ENCODE measurements at regions of chr22 and their contacts with region 1.

Region 1: GRCh38 chr22:36977947-36978660 is 41.1 kb downstream of the TST start:
- DNase-seq: peak; percentile 57
- ATAC-seq: peak; percentile 90
- H3K4me3 ChIP-seq: peak overlapping the region; percentile 47; the same call in 1 of the 2 replicates
- H3K27ac ChIP-seq: peak overlapping the region; percentile 13; the same call in 1 of the 2 replicates
- H3K4me1 ChIP-seq: no peaks in the 10 kb centered on the region; the same call in 1 of the 2 replicates
- H3K27me3 ChIP-seq: no peaks in the 10 kb centered on the region; a peak in 1 of 4 replicates
- CTCF ChIP-seq: peak; percentile 84 to 99 (median 91)
- EP300 ChIP-seq: no peak
- POLR2A ChIP-seq: no peak; the same call in 1 of the 2 replicates
- RAD21 ChIP-seq: peak; percentile 90

Region 2: GRCh38 chr22:36757668-36758211 is 220.4 kb before region 1 on chr22:
- CTCF ChIA-PET with region 1: interaction called, 17 read pairs
- POLR2A ChIA-PET with region 1: no interaction called
- RAD21 ChIA-PET with region 1: interaction called, 4 read pairs
- SMC1A ChIA-PET with region 1: interaction called, 11 read pairs
- in situ Hi-C with region 1: no loop called
- intact Hi-C with region 1: no loop called
- DNase-seq: no peak
- ATAC-seq: peak; percentile 99
- H3K4me3 ChIP-seq: no peak overlapping the region
- H3K27ac ChIP-seq: no peak overlapping the region
- H3K4me1 ChIP-seq: no peaks in the 10 kb centered on the region
- H3K27me3 ChIP-seq: peaks cover 2 to 4% of the 10 kb centered on the region in 2 experiments; a peak in 2 of 4 replicates
- CTCF ChIP-seq: peak; percentile 84 to 88 (median 87)
- EP300 ChIP-seq: no peak
- POLR2A ChIP-seq: no peak
- RAD21 ChIP-seq: peak; percentile 61

Region 3: GRCh38 chr22:36787204-36787988 is 190.7 kb before region 1 on chr22:
- CTCF ChIA-PET with region 1: interaction called, 115 read pairs
- POLR2A ChIA-PET with region 1: interaction called, 5 read pairs
- RAD21 ChIA-PET with region 1: interaction called, 34 read pairs
- SMC1A ChIA-PET with region 1: interaction called, 29 read pairs
- in situ Hi-C with region 1: loop called (anchors 5 kb)
- intact Hi-C with region 1: loop called (anchors 1 kb)
- DNase-seq: no peak
- ATAC-seq: no peak
- H3K4me3 ChIP-seq: no peak overlapping the region
- H3K27ac ChIP-seq: no peak overlapping the region
- H3K4me1 ChIP-seq: peaks cover 5% of the 10 kb centered on the region
- H3K27me3 ChIP-seq: peaks cover 2 to 5% of the 10 kb centered on the region in 2 experiments; a peak in 2 of 4 replicates
- CTCF ChIP-seq: no peak
- EP300 ChIP-seq: no peak
- POLR2A ChIP-seq: no peak
- RAD21 ChIP-seq: no peak

Region 4: DNA sequence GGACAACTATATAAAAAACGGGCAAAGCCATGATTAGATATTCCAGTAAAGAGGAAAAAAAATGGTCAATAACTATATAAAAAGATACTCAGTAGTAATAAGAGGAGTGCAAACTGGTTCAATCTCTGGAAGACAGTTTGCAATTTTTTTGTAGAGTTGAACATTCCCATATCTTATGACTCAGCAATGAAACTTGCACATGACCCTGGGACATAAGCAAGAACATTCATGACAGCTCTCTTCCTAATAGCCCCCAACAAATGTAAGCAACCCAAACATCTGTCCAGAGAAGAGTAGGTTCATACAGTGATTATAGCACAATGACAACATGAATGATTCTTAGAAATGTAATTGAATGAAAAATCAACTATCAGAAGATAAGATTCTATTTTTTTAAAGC is 86.5 kb before region 1 on chr22:
- CTCF ChIA-PET with region 1: interaction called, 16 read pairs
- POLR2A ChIA-PET with region 1: no interaction called
- RAD21 ChIA-PET with region 1: interaction called, 3 read pairs
- SMC1A ChIA-PET with region 1: no interaction called
- in situ Hi-C with region 1: no loop called
- intact Hi-C with region 1: no loop called
- DNase-seq: no peak
- ATAC-seq: no peak
- H3K4me3 ChIP-seq: no peak overlapping the region
- H3K27ac ChIP-seq: no peak overlapping the region
- H3K4me1 ChIP-seq: no peaks in the 10 kb centered on the region
- H3K27me3 ChIP-seq: no peaks in the 10 kb centered on the region
- CTCF ChIP-seq: no peak
- EP300 ChIP-seq: no peak
- POLR2A ChIP-seq: no peak
- RAD21 ChIP-seq: no peak

Region 5: GRCh38 chr22:36946421-36947158 is 31.5 kb before region 1 on chr22:
- CTCF ChIA-PET with region 1: interaction called, 33 read pairs
- POLR2A ChIA-PET with region 1: interaction called, 5 read pairs
- RAD21 ChIA-PET with region 1: interaction called, 19 read pairs
- SMC1A ChIA-PET with region 1: interaction called, 11 read pairs
- in situ Hi-C with region 1: no loop called
- intact Hi-C with region 1: loop called (anchors 5 kb)
- DNase-seq: no peak
- ATAC-seq: peak; percentile 68
- H3K4me3 ChIP-seq: no peak overlapping the region
- H3K27ac ChIP-seq: no peak overlapping the region
- H3K4me1 ChIP-seq: peaks cover 16% of the 10 kb centered on the region
- H3K27me3 ChIP-seq: no peaks in the 10 kb centered on the region
- CTCF ChIP-seq: peak in 2 of 3 experiments; percentile 21 to 39; a peak in 5 of 6 replicates
- EP300 ChIP-seq: no peak
- POLR2A ChIP-seq: no peak
- RAD21 ChIP-seq: peak; percentile 51

Region 6: DNA sequence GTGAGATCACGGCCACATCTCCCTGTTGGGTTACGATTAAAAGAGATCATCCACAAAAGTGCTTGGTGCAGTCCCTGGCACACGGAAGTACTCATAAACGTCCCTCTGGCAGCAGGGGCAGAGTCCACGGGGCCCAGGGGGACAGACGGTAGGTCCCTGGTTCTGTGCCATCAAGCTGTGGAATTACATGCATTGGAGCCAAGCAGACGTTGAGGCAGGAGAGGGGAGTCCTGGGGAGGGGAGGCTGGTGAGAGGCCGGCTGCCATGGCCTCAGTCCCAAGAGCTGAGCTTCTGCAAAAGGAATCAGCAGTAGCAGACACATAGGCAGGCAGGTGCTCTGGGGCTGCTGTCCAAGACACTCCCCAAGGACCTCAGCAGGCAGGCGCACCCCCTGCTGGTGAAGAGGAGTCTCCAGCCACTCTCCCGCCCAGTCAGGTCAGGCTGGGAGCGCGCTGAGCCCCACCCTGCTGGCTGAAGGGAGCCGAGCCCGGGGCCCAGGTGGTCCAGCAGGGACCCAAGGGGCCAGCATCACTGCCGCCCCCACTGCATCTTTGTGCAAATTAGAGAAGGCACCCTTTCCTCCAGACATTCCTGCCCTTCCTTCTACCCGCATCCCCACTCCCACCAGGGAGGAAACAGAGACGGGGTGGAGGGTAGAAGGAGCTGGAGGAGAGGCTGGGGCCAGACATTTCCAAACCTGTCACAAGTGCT is 65.9 kb after region 1 on chr22:
- CTCF ChIA-PET with region 1: interaction called, 11 read pairs
- POLR2A ChIA-PET with region 1: no interaction called
- RAD21 ChIA-PET with region 1: interaction called, 9 read pairs
- SMC1A ChIA-PET with region 1: interaction called, 5 read pairs
- in situ Hi-C with region 1: no loop called
- intact Hi-C with region 1: no loop called
- DNase-seq: no peak
- ATAC-seq: peak; percentile 99
- H3K4me3 ChIP-seq: no peak overlapping the region
- H3K27ac ChIP-seq: no peak overlapping the region
- H3K4me1 ChIP-seq: peaks cover 10% of the 10 kb centered on the region
- H3K27me3 ChIP-seq: peaks cover 0 to 2% of the 10 kb centered on the region in 2 experiments; a peak in 1 of 4 replicates
- CTCF ChIP-seq: peak; percentile 81 to 92 (median 85)
- EP300 ChIP-seq: no peak
- POLR2A ChIP-seq: no peak
- RAD21 ChIP-seq: peak; percentile 58

Region 7: DNA sequence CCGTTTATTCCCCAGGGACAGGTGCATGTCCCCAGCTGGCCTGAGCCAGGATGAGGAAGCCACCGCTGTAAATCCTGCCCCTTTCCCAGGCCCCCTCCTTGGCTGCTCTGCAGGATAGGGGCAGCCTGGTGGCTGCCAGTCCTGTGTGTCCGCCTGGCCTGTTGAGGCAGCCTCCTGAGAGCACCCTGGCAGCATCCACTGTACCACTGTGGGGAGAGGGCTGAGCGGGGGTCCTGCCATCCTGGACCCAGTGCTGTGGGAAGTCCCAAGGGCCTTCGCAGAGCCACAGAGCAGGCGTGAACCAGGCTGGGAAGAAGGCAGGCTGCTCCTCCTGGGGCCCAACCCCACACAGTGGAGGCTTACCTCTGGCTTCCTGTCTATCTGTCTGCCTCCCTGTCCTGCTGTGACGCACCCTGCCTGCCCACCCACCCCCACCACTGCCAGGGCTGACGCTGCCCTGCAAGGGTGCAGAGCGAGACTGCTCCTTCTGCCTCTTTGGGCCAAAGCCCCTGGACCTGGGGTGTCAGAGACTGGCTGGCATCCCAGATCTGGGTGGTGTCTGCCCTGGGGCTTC is 81.9 kb after region 1 on chr22:
- CTCF ChIA-PET with region 1: no interaction called
- POLR2A ChIA-PET with region 1: no interaction called
- RAD21 ChIA-PET with region 1: no interaction called
- SMC1A ChIA-PET with region 1: no interaction called
- in situ Hi-C with region 1: no loop called
- intact Hi-C with region 1: no loop called
- DNase-seq: no peak
- ATAC-seq: peak; percentile 40
- H3K4me3 ChIP-seq: no peak overlapping the region
- H3K27ac ChIP-seq: no peak overlapping the region
- H3K4me1 ChIP-seq: peaks cover 11% of the 10 kb centered on the region
- H3K27me3 ChIP-seq: no peaks in the 10 kb centered on the region
- CTCF ChIP-seq: no peak
- EP300 ChIP-seq: no peak
- POLR2A ChIP-seq: no peak
- RAD21 ChIP-seq: no peak

Region 8: GRCh38 chr22:37161443-37161842 is 183.3 kb after region 1 on chr22:
- CTCF ChIA-PET with region 1: no interaction called
- POLR2A ChIA-PET with region 1: no interaction called
- RAD21 ChIA-PET with region 1: no interaction called
- SMC1A ChIA-PET with region 1: no interaction called
- in situ Hi-C with region 1: no loop called
- intact Hi-C with region 1: no loop called
- DNase-seq: no peak
- ATAC-seq: no peak
- H3K4me3 ChIP-seq: no peak overlapping the region
- H3K27ac ChIP-seq: peak overlapping the region; percentile 99
- H3K4me1 ChIP-seq: peaks cover 59% of the 10 kb centered on the region
- H3K27me3 ChIP-seq: no peaks in the 10 kb centered on the region
- CTCF ChIP-seq: no peak
- EP300 ChIP-seq: no peak
- POLR2A ChIP-seq: no peak
- RAD21 ChIP-seq: no peak

Region 9: GRCh38 chr22:37204731-37205445 is 226.8 kb after region 1 on chr22:
- CTCF ChIA-PET with region 1: no interaction called
- POLR2A ChIA-PET with region 1: no interaction called
- RAD21 ChIA-PET with region 1: no interaction called
- SMC1A ChIA-PET with region 1: no interaction called
- in situ Hi-C with region 1: no loop called
- intact Hi-C with region 1: no loop called
- DNase-seq: no peak
- ATAC-seq: no peak
- H3K4me3 ChIP-seq: no peak overlapping the region
- H3K27ac ChIP-seq: no peak overlapping the region
- H3K4me1 ChIP-seq: peaks cover 17% of the 10 kb centered on the region
- H3K27me3 ChIP-seq: no peaks in the 10 kb centered on the region
- CTCF ChIP-seq: no peak
- EP300 ChIP-seq: no peak
- POLR2A ChIP-seq: peak; percentile 38; the same call in 1 of the 2 replicates
- RAD21 ChIP-seq: no peak